ENCODE measurements at regions of chr11 and their contacts with region 1.

Region 1: GRCh38 chr11:130861902-130862860 is 54.1 kb downstream of the SNX19 start:
- DNase-seq: peak; percentile 36 to 90
- ATAC-seq: peak; percentile 81 to 95
- H3K4me3 ChIP-seq: no peak overlapping the region
- H3K27ac ChIP-seq: peak overlapping the region; percentile 30 to 70; a peak in 5 of 6 replicates
- H3K4me1 ChIP-seq: 0 out of 3 replicates have a peak, but pooled peaks cover 2% of the 10 kb centered on the region
- CTCF ChIP-seq: peak; percentile 100
- EP300 ChIP-seq: no peak
- POLR2A ChIP-seq: no peak
- RAD21 ChIP-seq: peak; percentile 100

Region 2: GRCh38 chr11:130434521-130435223 is 427.5 kb before region 1 on chr11:
- CTCF ChIA-PET with region 1: interaction called, 732 read pairs
- POLR2A ChIA-PET with region 1: no interaction called
- DNase-seq: peak; percentile 78 to 79
- ATAC-seq: peak; percentile 85 to 87
- H3K4me3 ChIP-seq: peak overlapping the region; percentile 63
- H3K27ac ChIP-seq: peak overlapping the region; percentile 84 to 87
- H3K4me1 ChIP-seq: peaks cover 12% of the 10 kb centered on the region
- CTCF ChIP-seq: peak; percentile 68
- EP300 ChIP-seq: no peak
- POLR2A ChIP-seq: no peak
- RAD21 ChIP-seq: peak; percentile 85 to 90

Region 3: DNA sequence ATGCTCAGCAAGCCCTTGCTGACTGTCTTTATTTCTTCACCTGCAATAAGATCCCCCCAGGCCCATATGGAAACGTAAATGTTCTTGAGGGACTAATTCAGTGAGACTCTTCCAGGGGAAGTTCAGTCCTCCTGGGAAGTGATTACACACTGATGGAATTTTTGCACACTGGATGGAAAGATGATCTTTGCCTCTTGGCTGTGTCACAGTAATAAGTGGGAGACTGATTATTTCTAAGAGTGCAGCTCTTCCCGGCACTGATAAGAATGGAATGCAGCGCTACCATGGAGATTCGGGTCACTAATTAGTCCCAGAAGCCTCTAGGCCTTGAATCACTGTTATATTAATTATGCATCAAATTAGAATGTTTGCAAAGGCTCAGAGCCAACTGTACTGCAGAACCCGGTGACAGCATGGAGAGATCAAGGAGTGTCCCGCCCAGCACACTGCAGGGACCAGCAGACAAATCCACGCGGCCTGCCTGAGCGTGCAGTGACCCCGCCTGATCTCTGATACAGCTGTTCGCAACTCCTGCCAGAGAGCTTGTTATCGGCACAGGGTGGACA is 124.2 kb before region 1 on chr11:
- CTCF ChIA-PET with region 1: no interaction called
- POLR2A ChIA-PET with region 1: no interaction called
- DNase-seq: no peak
- ATAC-seq: no peak
- H3K4me3 ChIP-seq: no peak overlapping the region
- H3K27ac ChIP-seq: no peak overlapping the region
- H3K4me1 ChIP-seq: no peaks in the 10 kb centered on the region
- CTCF ChIP-seq: no peak
- EP300 ChIP-seq: no peak
- POLR2A ChIP-seq: no peak
- RAD21 ChIP-seq: no peak

Region 4: GRCh38 chr11:130787092-130787616 is 75.0 kb before region 1 on chr11:
- CTCF ChIA-PET with region 1: interaction called, 10 read pairs
- POLR2A ChIA-PET with region 1: no interaction called
- DNase-seq: no peak
- ATAC-seq: no peak
- H3K4me3 ChIP-seq: no peak overlapping the region
- H3K27ac ChIP-seq: no peak overlapping the region; a peak in 1 of 6 replicates
- H3K4me1 ChIP-seq: peaks cover 13% of the 10 kb centered on the region
- CTCF ChIP-seq: no peak
- EP300 ChIP-seq: no peak
- POLR2A ChIP-seq: no peak
- RAD21 ChIP-seq: no peak

Region 5: DNA sequence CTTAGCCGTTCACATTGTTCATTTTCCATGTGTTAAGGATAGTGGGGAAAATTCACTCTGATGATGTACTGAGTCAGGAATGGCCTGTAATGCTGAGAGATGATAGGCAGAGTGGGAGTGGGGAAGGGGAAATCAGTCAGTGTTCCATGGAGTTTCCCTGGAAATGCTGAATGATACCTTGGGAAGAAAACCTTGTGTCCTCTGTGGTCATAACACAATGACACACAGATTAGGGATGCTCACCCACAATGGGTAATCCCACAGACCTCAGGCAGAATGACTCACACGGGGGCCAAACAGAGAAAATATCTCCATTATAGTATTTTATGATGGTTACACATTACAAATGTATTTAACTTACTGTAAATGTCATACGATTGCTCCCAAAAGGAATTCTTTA is 63.9 kb before region 1 on chr11:
- CTCF ChIA-PET with region 1: no interaction called
- POLR2A ChIA-PET with region 1: no interaction called
- DNase-seq: peak in 1 of 2 experiments; percentile 18
- ATAC-seq: peak; percentile 39 to 53; a peak in 3 of 6 replicates
- H3K4me3 ChIP-seq: no peak overlapping the region
- H3K27ac ChIP-seq: no peak overlapping the region
- H3K4me1 ChIP-seq: 0 out of 3 replicates have a peak, but pooled peaks cover 2% of the 10 kb centered on the region
- CTCF ChIP-seq: no peak
- EP300 ChIP-seq: no peak
- POLR2A ChIP-seq: no peak
- RAD21 ChIP-seq: no peak

Region 6: GRCh38 chr11:130839981-130840666 is 22.1 kb before region 1 on chr11:
- CTCF ChIA-PET with region 1: interaction called, 12 read pairs
- POLR2A ChIA-PET with region 1: no interaction called
- DNase-seq: no peak
- ATAC-seq: no peak
- H3K4me3 ChIP-seq: no peak overlapping the region
- H3K27ac ChIP-seq: no peak overlapping the region
- H3K4me1 ChIP-seq: no peaks in the 10 kb centered on the region
- CTCF ChIP-seq: no peak
- EP300 ChIP-seq: no peak
- POLR2A ChIP-seq: no peak
- RAD21 ChIP-seq: no peak

Region 7: DNA sequence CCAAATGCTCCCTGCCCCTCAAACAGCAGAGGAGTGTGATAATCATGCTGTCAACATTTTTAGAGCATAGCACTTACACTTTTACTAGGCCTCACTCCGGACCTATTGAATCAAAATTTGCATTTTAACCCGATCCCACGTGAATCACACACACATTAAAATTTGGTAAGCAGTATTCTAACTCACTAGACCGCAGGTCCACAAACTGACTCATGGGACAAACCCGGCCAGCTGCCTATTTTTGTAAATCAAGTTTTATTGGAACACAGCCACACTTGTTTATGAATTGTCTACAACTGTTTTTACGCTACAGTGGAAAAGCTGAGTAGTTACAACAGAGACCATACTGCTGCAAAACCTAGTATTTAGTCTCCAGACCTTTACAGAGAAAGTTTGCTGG is 10.8 kb after region 1 on chr11:
- CTCF ChIA-PET with region 1: interaction called, 43 read pairs
- POLR2A ChIA-PET with region 1: no interaction called
- DNase-seq: no peak
- ATAC-seq: no peak
- H3K4me3 ChIP-seq: no peak overlapping the region
- H3K27ac ChIP-seq: no peak overlapping the region
- H3K4me1 ChIP-seq: no peaks in the 10 kb centered on the region
- CTCF ChIP-seq: no peak
- EP300 ChIP-seq: no peak
- POLR2A ChIP-seq: no peak
- RAD21 ChIP-seq: no peak

Region 8: GRCh38 chr11:130894322-130895025 is 32.3 kb after region 1 on chr11:
- CTCF ChIA-PET with region 1: interaction called, 29 read pairs
- POLR2A ChIA-PET with region 1: interaction called, 3 read pairs
- DNase-seq: peak; percentile 20 to 66
- ATAC-seq: peak; percentile 75 to 89; a peak in 4 of 6 replicates
- H3K4me3 ChIP-seq: no peak overlapping the region
- H3K27ac ChIP-seq: 0 out of 6 replicates have a peak overlapping the region, but pooled peaks of 1 of the 2 experiments have one; percentile 22
- H3K4me1 ChIP-seq: peaks cover 18% of the 10 kb centered on the region; the same call in 2 of the 3 replicates
- CTCF ChIP-seq: peak; percentile 65
- EP300 ChIP-seq: no peak
- POLR2A ChIP-seq: no peak
- RAD21 ChIP-seq: peak; percentile 61 to 69; a peak in 4 of 5 replicates

Region 9: DNA sequence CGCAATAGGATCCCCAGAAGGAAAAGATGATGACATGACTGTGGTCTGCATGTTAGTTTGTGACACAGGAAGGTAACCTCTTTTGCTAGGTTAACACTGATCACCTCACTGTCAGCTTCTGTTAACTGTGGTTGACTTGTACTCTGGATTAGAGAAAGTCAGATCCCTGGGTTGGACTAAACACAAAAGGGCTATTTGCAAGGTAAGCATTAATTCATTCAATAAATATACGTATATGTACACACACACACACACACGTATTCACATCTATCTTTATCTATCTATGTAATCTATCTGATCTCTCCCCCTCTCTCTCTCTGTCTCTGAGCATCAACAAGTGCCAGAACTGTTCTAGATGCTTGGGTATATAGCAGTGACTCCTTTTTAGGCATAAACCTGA is 190.2 kb after region 1 on chr11:
- CTCF ChIA-PET with region 1: no interaction called
- POLR2A ChIA-PET with region 1: no interaction called
- DNase-seq: no peak
- ATAC-seq: no peak
- H3K4me3 ChIP-seq: no peak overlapping the region
- H3K27ac ChIP-seq: no peak overlapping the region
- H3K4me1 ChIP-seq: no peaks in the 10 kb centered on the region
- CTCF ChIP-seq: no peak
- EP300 ChIP-seq: no peak
- POLR2A ChIP-seq: no peak
- RAD21 ChIP-seq: no peak

Measured in A549 (cell line).